Activated naive CD4-positive, alpha-beta T cell treated with anti-CD3 and anti-CD28 coated beads for 36 hours (primary cell): ENCODE measurements at regions of chr3 and their contacts with region 1.

Region 1: GRCh38 chr3:71064288-71064955 is 519.1 kb downstream of the FOXP1 start:
- DNase-seq: peak; percentile 69
- H3K4me3 Mint-ChIP-seq: no peak overlapping the region
- H3K27ac Mint-ChIP-seq: no peak overlapping the region
- H3K4me1 Mint-ChIP-seq: peaks cover 51% of the 10 kb centered on the region
- H3K27me3 Mint-ChIP-seq: no peaks in the 10 kb centered on the region

Region 2: GRCh38 chr3:70603103-70603502 is 461.3 kb before region 1 on chr3:
- CTCF ChIA-PET with region 1: no interaction called
- intact Hi-C with region 1: loop called (anchors 1 kb)
- DNase-seq: peak; percentile 55
- H3K4me3 Mint-ChIP-seq: no peak overlapping the region
- H3K27ac Mint-ChIP-seq: peak overlapping the region; percentile 28
- H3K4me1 Mint-ChIP-seq: peaks cover 10% of the 10 kb centered on the region
- H3K27me3 Mint-ChIP-seq: peaks cover 13% of the 10 kb centered on the region

Region 3: GRCh38 chr3:71031914-71032521 is 32.4 kb before region 1 on chr3:
- CTCF ChIA-PET with region 1: interaction called, 3 read pairs
- intact Hi-C with region 1: loop called (anchors 1 kb)
- DNase-seq: peak; percentile 26
- H3K4me3 Mint-ChIP-seq: no peak overlapping the region
- H3K27ac Mint-ChIP-seq: peak overlapping the region; percentile 80
- H3K4me1 Mint-ChIP-seq: peaks cover 82% of the 10 kb centered on the region
- H3K27me3 Mint-ChIP-seq: no peaks in the 10 kb centered on the region

Region 4: GRCh38 chr3:71130471-71131374 is 66.3 kb after region 1 on chr3:
- CTCF ChIA-PET with region 1: interaction called, 5 read pairs
- intact Hi-C with region 1: loop called (anchors 1 kb)
- DNase-seq: peak; percentile 82
- H3K4me3 Mint-ChIP-seq: peak overlapping the region; percentile 88
- H3K27ac Mint-ChIP-seq: peak overlapping the region; percentile 96
- H3K4me1 Mint-ChIP-seq: peaks cover 66% of the 10 kb centered on the region
- H3K27me3 Mint-ChIP-seq: no peaks in the 10 kb centered on the region

Region 5: GRCh38 chr3:71397046-71397445 is 332.6 kb after region 1 on chr3:
- CTCF ChIA-PET with region 1: no interaction called
- intact Hi-C with region 1: loop called (anchors 1 kb)
- DNase-seq: peak; percentile 35
- H3K4me3 Mint-ChIP-seq: peak overlapping the region; percentile 5
- H3K27ac Mint-ChIP-seq: no peak overlapping the region
- H3K4me1 Mint-ChIP-seq: peaks cover 81% of the 10 kb centered on the region
- H3K27me3 Mint-ChIP-seq: no peaks in the 10 kb centered on the region